HepG2 (cell line): ENCODE measurements at regions of chr2 and their contacts with region 1.

Region 1: DNA sequence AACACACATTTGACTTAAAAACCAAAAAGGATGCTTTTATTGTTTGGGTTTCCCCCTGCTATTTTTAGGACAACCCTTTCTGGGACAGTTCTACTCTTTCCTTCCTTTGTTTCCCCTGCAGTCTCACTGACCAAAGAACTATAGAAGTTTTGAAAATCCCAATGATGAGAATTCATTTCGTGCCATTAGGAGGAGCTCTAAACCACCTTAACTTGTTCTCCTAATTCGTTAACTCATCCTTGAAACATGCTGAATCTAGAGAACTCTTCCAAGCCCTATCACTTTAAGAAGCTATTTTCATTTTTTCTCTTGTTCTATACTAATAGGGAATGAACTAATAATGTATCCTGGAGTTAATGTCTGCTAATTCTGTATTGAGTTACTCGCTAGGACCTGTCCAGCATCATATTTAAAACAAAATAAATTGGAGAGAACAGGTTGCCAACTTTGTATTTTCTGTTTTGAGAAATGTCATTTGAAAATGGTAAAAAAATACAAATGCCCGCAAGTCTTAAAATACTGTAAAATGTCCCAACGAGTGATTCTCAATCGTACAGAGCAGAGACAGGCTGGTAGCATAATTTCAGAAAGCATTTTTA is 62.9 kb downstream of the AFTPH start:
- DNase-seq: peak; percentile 35
- ATAC-seq: no peak
- H3K4me3 ChIP-seq: no peak overlapping the region
- H3K27ac ChIP-seq: no peak overlapping the region
- H3K4me1 ChIP-seq: no peaks in the 10 kb centered on the region
- H3K27me3 ChIP-seq: no peaks in the 10 kb centered on the region
- CTCF ChIP-seq: peak; percentile 72
- EP300 ChIP-seq: no peak
- POLR2A ChIP-seq: no peak
- RAD21 ChIP-seq: peak; percentile 40; the same call in 1 of the 2 replicates

Region 2: GRCh38 chr2:63875131-63875527 is 711.9 kb before region 1 on chr2:
- CTCF ChIA-PET with region 1: no interaction called
- POLR2A ChIA-PET with region 1: no interaction called
- in situ Hi-C with region 1: no loop called
- intact Hi-C with region 1: no loop called
- DNase-seq: no peak
- ATAC-seq: no peak
- H3K4me3 ChIP-seq: no peak overlapping the region
- H3K27ac ChIP-seq: no peak overlapping the region
- H3K4me1 ChIP-seq: peaks cover 34% of the 10 kb centered on the region
- H3K27me3 ChIP-seq: no peaks in the 10 kb centered on the region
- CTCF ChIP-seq: no peak
- EP300 ChIP-seq: no peak
- POLR2A ChIP-seq: no peak
- RAD21 ChIP-seq: no peak

Region 3: DNA sequence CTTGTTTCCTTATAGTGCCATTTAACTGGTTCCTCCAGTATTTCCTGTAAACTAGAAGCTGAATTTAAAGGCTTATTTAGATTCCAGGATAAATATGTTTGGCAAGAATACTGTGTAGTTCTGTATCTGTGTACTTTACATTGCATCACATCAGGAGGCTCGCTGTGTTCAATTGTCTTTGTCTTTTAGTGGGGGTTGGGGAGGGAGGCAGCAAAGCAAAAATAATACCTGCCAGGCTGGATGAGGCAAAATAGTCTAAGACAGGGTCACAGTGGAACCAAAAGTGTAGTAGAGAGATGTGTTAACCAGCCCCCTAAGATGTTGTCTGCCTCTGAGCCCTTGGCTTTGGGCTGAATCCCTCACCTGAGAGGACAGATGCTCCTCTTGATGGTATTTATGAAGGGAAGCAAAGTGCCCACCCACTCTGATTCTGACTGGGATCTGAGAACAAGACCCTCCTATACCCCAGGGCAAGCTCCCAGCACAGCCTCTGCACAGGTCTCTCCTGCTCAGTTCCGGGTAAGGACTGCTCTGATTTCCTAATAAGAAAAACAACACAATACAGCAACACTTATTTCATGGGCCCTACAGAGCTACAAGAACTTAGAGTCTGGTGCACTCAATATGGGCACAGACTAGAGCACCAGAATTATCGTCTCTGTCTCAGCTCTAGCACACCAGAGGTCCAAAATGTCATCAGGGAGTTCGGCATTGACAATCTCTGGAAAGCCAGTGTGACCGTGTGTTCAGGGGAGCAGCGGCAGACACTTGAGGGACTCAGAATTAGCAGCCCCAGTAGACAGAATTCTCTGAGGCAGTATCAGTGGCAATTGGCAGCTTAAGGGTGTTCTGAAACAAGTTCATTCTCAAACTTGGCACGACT is 70.1 kb before region 1 on chr2:
- CTCF ChIA-PET with region 1: no interaction called
- POLR2A ChIA-PET with region 1: no interaction called
- in situ Hi-C with region 1: no loop called
- intact Hi-C with region 1: no loop called
- DNase-seq: peak; percentile 74
- ATAC-seq: peak; percentile 78
- H3K4me3 ChIP-seq: peak overlapping the region; percentile 11 to 58 (median 34); a peak in 5 of 6 replicates
- H3K27ac ChIP-seq: peak overlapping the region; percentile 22
- H3K4me1 ChIP-seq: peaks cover 52% of the 10 kb centered on the region
- H3K27me3 ChIP-seq: no peaks in the 10 kb centered on the region
- CTCF ChIP-seq: no peak
- EP300 ChIP-seq: peak; percentile 59 to 81; a peak in 3 of 4 replicates
- POLR2A ChIP-seq: no peak
- RAD21 ChIP-seq: no peak

Region 4: DNA sequence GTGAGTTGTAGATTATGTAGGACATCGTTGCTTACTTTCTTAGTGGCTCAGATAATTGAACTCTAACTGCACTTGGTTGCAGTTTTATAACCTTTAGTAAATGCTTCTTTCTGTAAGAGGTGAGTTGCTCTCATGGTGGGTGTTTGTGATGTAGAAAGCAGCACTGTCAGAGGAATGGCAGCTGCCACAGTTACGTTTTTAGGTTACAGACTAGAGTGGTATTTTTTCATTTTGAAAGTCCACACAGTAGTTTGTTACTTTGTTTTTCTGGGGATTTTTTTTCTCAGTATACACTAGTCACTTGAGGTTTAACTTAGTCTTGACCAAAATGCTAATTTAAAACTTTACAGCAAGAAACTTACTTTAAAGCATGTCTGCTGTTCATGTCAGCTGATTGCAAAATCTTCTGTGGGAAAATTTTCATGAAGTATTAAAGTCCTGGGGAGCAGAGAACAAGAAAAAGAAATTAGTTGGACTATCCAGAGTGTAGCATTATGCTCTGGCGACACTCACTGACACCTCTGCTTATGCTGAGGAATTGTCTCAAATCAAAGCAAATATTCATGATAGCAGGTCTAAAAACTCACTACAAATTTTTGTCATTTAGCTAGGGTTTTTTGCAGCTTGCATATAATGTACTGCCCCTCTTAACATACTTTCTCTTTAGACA is 48.1 kb before region 1 on chr2:
- CTCF ChIA-PET with region 1: no interaction called
- POLR2A ChIA-PET with region 1: no interaction called
- in situ Hi-C with region 1: no loop called
- intact Hi-C with region 1: no loop called
- DNase-seq: no peak
- ATAC-seq: no peak
- H3K4me3 ChIP-seq: no peak overlapping the region
- H3K27ac ChIP-seq: no peak overlapping the region
- H3K4me1 ChIP-seq: peaks cover 76% of the 10 kb centered on the region
- H3K27me3 ChIP-seq: no peaks in the 10 kb centered on the region
- CTCF ChIP-seq: no peak
- EP300 ChIP-seq: no peak
- POLR2A ChIP-seq: no peak
- RAD21 ChIP-seq: no peak

Region 5: DNA sequence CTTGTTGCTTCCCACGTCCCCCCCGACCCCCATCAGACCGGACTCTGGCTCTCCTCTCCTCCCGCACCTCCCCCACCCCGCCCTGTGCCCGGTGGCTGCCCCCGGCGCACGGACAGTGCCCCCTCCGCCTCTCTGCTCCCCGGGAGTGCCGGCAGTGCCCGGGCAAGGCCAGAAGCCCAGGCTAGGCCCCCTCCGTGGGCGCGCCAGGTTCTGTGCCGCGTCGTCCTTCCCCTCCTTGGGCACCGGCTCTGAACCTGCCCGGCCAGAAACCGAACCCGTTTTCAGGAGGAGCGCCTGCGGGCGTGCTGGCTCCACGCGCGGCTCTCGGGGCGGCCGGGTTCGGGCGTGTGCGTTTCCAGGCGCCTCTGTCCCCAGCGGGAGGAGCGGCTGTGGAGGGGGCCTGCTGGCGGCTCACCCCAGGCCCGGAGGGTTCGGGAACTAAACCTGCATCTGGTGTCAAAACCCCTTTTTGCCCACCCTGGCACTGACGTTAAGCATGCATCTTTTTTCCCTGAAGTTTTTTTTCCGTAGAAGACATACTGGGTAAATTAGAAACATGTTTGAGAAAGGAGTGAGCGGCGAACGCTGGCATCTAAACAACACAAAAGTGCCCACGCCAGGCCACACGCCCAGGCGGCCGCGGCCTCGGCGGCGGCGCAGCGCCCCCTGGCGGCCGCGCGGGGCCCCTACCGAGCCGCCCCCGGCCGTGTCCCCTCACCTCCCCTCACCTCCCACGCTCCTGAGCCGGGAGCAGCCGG is 278.3 kb after region 1 on chr2:
- CTCF ChIA-PET with region 1: interaction called, 11 read pairs
- POLR2A ChIA-PET with region 1: no interaction called
- in situ Hi-C with region 1: no loop called
- intact Hi-C with region 1: loop called (anchors 1 kb)
- DNase-seq: no peak
- ATAC-seq: peak; percentile 90
- H3K4me3 ChIP-seq: peak overlapping the region; percentile 78 to 86 (median 81)
- H3K27ac ChIP-seq: no peak overlapping the region
- H3K4me1 ChIP-seq: peaks cover 30% of the 10 kb centered on the region
- H3K27me3 ChIP-seq: peaks cover 5 to 61% of the 10 kb centered on the region in 2 experiments
- CTCF ChIP-seq: peak; percentile 60; the same call in 1 of the 2 replicates
- EP300 ChIP-seq: no peak
- POLR2A ChIP-seq: no peak
- RAD21 ChIP-seq: peak; percentile 98

Region 6: DNA sequence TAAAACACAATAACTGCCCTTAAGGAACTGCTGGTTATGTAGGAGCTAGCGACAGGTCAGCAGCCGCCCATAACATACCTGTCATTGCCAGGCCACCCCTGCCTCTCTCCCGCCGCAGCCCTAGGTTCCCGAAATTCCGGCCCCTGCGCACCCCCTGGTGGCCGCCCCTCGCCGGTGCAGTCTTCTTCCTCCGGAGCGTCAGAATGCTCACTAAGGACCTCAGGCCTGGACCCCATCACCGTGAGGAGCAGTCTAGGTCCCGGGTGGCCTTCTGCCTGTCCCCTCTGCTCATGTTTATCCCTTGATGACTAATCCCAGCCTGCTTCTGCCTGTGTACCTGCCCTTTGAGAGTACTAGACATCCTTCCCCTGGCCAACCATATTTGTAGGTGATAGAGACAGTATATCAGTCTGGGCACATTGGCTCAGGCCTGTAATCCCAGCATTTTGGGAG is 286.5 kb after region 1 on chr2:
- CTCF ChIA-PET with region 1: interaction called, 20 read pairs
- POLR2A ChIA-PET with region 1: no interaction called
- in situ Hi-C with region 1: no loop called
- intact Hi-C with region 1: loop called (anchors 1 kb)
- DNase-seq: peak; percentile 53
- ATAC-seq: peak; percentile 96
- H3K4me3 ChIP-seq: peak overlapping the region in 1 of 3 experiments; percentile 32; a peak in 1 of 6 replicates
- H3K27ac ChIP-seq: no peak overlapping the region
- H3K4me1 ChIP-seq: 0 out of 2 replicates have a peak, but pooled peaks cover 8% of the 10 kb centered on the region
- H3K27me3 ChIP-seq: peaks cover 0 to 13% of the 10 kb centered on the region in 2 experiments; a peak in 2 of 5 replicates
- CTCF ChIP-seq: peak; percentile 99
- EP300 ChIP-seq: no peak
- POLR2A ChIP-seq: no peak
- RAD21 ChIP-seq: peak; percentile 95